Activated T-helper 2 cell treated with anti-CD3 and anti-CD28 coated beads, Interferon-gamma antibody, Interleukin-2, Interleukin-4, amounts not matched to agents 10 μg/mL and 5 μg/mL and 100 μg/mL, durations not matched to agents 14 hours and 24 hours and 36 hours (primary cell): ENCODE measurements at regions of chr9 and their contacts with region 1.

Region 1: GRCh38 chr9:137590462-137591383 is at the start of gene ZMYND19:
- DNase-seq: peak; percentile 87
- H3K4me3 Mint-ChIP-seq: peak within 1 kb of the TSS; percentile 99
- H3K27ac Mint-ChIP-seq: peak within 1 kb of the TSS; percentile 95
- H3K4me1 Mint-ChIP-seq: peaks cover 6% of the 10 kb centered on the region
- H3K27me3 Mint-ChIP-seq: no peaks in the 10 kb centered on the region
- total RNA-seq, gene ZMYND19: 72.4 and 74.4 TPM in 2 replicates

Region 2: DNA sequence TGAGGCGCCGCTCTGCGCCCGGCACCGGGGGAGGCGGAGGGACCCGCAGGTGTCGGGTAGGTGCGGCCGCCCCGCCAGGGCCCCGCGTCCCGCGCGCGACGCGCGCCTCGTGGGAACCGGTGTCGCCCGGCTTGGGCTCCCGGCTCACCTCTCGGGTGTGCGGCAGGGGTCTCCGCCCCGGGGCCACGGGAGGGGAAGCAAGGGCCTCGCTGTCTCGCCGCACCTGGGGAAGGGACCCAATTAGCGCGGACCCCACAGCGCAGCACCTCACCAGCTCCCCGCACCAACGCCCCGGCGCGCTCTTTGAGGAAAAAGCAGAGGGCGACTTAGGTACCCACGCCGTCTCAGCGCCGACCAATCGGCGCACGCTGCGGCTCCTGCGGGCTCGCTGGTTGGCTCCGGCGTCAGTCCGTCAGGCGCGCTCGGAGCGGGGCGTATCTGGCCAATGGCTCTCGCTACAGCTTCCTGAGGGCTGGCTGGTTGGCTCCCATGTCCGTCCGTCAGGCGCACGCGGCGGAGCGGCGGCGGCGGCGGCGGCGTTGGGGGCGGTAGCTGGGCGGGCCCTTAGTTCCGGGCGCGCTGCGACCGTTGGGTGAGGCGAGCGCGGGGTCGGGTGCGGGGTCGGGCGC is 704.7 kb before region 1 on chr9 and contains the start of gene TRAF2:
- intact Hi-C with region 1: no loop called
- DNase-seq: peak; percentile 99
- H3K4me3 Mint-ChIP-seq: peak within 1 kb of the TSS; percentile 97
- H3K27ac Mint-ChIP-seq: peak within 1 kb of the TSS; percentile 87
- H3K4me1 Mint-ChIP-seq: peaks cover 30% of the 10 kb centered on the region
- H3K27me3 Mint-ChIP-seq: no peaks in the 10 kb centered on the region
- total RNA-seq, gene TRAF2: 59.5 and 60.4 TPM in 2 replicates

Region 3: GRCh38 chr9:137516144-137516917 is 74.4 kb before region 1 on chr9:
- intact Hi-C with region 1: no loop called
- DNase-seq: no peak
- H3K4me3 Mint-ChIP-seq: no peak overlapping the region
- H3K27ac Mint-ChIP-seq: no peak overlapping the region
- H3K4me1 Mint-ChIP-seq: peaks cover 2% of the 10 kb centered on the region
- H3K27me3 Mint-ChIP-seq: no peaks in the 10 kb centered on the region

Region 4: GRCh38 chr9:137534256-137535117 is 56.2 kb before region 1 on chr9:
- intact Hi-C with region 1: loop called (anchors 5 kb)
- DNase-seq: no peak
- H3K4me3 Mint-ChIP-seq: no peak overlapping the region
- H3K27ac Mint-ChIP-seq: peak overlapping the region; percentile 36
- H3K4me1 Mint-ChIP-seq: peaks cover 26% of the 10 kb centered on the region
- H3K27me3 Mint-ChIP-seq: no peaks in the 10 kb centered on the region

Region 5: DNA sequence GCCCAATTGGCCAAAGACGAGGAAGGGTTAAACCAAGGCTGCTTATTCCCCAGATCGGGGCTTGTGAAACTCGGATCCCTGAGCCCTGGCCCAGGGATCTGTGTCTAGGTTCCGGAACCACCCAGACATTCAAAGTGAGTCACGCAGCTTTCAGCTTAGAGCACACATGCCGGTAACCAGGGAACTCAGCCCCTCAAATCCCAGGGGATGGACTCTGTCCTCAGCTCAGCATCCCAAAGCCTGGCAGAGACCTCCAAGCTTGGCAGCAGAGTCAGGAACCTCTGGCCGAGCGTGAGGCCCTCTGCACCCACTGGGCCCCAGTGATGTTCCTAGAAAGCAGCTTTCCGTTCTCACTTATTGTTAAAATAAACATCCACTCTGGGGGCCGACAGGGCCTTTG is 45.6 kb before region 1 on chr9:
- intact Hi-C with region 1: no loop called
- DNase-seq: no peak
- H3K4me3 Mint-ChIP-seq: no peak overlapping the region
- H3K27ac Mint-ChIP-seq: no peak overlapping the region
- H3K4me1 Mint-ChIP-seq: peaks cover 7% of the 10 kb centered on the region
- H3K27me3 Mint-ChIP-seq: no peaks in the 10 kb centered on the region